AG04449 (cell line): ENCODE measurements at regions of chr1 and their contacts with region 1.

Region 1: GRCh38 chr1:115764541-115764940 is 4.0 kb downstream of the CASQ2 start:
- DNase-seq: no peak
- H3K4me3 ChIP-seq: no peak overlapping the region
- CTCF ChIP-seq: peak; percentile 19

Region 2: DNA sequence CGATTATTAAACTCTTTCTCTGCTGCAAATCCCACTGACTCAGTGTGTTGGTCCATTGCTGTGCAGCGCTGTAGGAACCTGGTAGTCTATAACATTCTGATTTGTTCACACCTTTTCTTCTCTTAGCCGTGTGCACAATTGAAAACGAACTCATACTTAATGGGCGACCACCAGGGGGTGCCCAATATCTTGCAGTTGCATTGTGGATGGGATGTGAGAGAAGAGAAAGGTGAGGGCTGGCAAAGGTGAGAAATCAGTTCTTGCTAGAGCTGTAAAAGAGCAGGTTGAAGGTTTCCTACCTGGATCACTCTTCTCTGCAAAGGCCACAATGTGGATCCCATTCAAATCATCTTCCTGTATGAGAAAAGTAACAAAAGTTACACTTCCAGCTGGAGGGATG is 47.0 kb before region 1 on chr1:
- CTCF ChIA-PET with region 1: interaction called, 16 read pairs
- POLR2A ChIA-PET with region 1: no interaction called
- DNase-seq: no peak
- H3K4me3 ChIP-seq: no peak overlapping the region
- CTCF ChIP-seq: peak; percentile 16

Region 3: GRCh38 chr1:115744646-115745275 is 19.8 kb before region 1 on chr1:
- CTCF ChIA-PET with region 1: no interaction called
- POLR2A ChIA-PET with region 1: no interaction called
- DNase-seq: no peak
- H3K4me3 ChIP-seq: no peak overlapping the region
- CTCF ChIP-seq: no peak